CD4-positive, alpha-beta memory T cell (primary cell): ENCODE measurements at regions of chrX and their contacts with region 1.

Region 1: GRCh38 chrX:132292793-132293192 is 73.5 kb upstream of the RAP2C start:
- DNase-seq: peak; percentile 32 to 49 (median 37)
- H3K4me3 ChIP-seq: no peak overlapping the region
- H3K4me3 Mint-ChIP-seq: no peak overlapping the region
- H3K27ac ChIP-seq: no peak overlapping the region
- H3K27ac Mint-ChIP-seq: no peak overlapping the region
- H3K4me1 ChIP-seq: no peaks in the 10 kb centered on the region
- H3K4me1 Mint-ChIP-seq: peaks cover 0 to under 1% (median 0%) of the 10 kb centered on the region in 4 donors
- H3K27me3 ChIP-seq: no peaks in the 10 kb centered on the region
- H3K27me3 Mint-ChIP-seq: no peaks in the 10 kb centered on the region

Region 2: DNA sequence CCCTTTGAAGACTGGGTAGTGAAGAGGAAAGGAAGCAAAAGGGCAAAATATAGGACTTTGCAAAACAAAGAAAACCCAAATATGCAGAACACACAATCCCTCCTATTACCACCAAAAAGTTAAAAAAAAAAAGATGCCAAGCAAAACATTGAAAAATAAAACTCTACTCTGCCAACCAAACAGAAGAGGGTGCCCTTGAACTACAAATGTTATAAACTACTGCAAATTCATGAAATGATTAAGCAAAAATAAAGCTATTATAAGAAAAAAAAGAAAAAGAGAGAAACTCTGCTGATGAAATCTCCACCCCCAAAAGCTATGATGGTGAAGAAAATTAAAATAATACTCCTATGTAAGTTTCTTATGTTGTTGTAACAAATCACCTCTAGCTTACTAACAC is 438.2 kb before region 1 on chrX:
- CTCF ChIA-PET with region 1: no interaction called
- POLR2A ChIA-PET with region 1: no interaction called
- intact Hi-C with region 1: loop called (anchors 5 kb)
- DNase-seq: peak in 4 of 5 donors; percentile 26 to 33 (median 30)
- H3K4me3 ChIP-seq: no peak overlapping the region
- H3K4me3 Mint-ChIP-seq: no peak overlapping the region
- H3K27ac ChIP-seq: no peak overlapping the region
- H3K27ac Mint-ChIP-seq: no peak overlapping the region
- H3K4me1 ChIP-seq: no peaks in the 10 kb centered on the region
- H3K4me1 Mint-ChIP-seq: no peaks in the 10 kb centered on the region
- H3K27me3 ChIP-seq: no peaks in the 10 kb centered on the region
- H3K27me3 Mint-ChIP-seq: no peaks in the 10 kb centered on the region

Region 3: DNA sequence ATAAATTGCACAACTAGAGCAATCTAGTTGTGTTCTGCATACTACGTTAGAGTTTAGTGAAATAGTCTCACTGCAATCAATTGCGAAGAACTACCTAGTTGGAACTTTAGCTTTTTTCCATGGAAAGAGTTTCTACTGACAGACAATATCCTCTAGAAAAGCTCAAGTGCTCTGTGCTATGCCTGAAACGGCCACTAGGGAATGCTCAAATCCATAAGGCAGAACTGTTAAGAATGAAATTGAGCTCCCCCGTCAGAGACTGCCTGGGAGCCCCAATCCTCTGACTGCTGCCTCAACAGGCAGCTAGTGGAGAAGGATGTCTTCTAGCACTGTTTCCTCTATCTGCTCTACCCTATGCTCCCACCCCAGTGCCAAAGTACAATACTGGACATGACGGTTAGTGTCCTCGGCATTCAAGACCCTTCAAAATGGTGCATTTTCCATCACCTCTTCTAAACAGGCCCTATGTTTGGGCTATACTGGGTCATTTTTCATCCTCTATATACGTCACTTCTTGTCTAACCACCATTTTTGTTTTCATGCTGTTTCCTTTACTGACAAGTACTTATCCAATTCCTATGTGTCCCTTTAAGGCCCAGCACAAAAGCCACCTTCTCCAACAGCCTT is 200.2 kb before region 1 on chrX:
- CTCF ChIA-PET with region 1: interaction called, 6 read pairs
- POLR2A ChIA-PET with region 1: no interaction called
- intact Hi-C with region 1: loop called (anchors 5 kb)
- DNase-seq: peak; percentile 39 to 50 (median 42)
- H3K4me3 ChIP-seq: no peak overlapping the region
- H3K4me3 Mint-ChIP-seq: peak overlapping the region in 1 of 8 donors; percentile 11
- H3K27ac ChIP-seq: no peak overlapping the region
- H3K27ac Mint-ChIP-seq: peak overlapping the region in 1 of 7 donors; percentile 41
- H3K4me1 ChIP-seq: no peaks in the 10 kb centered on the region
- H3K4me1 Mint-ChIP-seq: peaks cover 0 to 5% (median 2%) of the 10 kb centered on the region in 4 donors
- H3K27me3 ChIP-seq: no peaks in the 10 kb centered on the region
- H3K27me3 Mint-ChIP-seq: peaks cover 3% of the 10 kb centered on the region in 2 donors

Region 4: DNA sequence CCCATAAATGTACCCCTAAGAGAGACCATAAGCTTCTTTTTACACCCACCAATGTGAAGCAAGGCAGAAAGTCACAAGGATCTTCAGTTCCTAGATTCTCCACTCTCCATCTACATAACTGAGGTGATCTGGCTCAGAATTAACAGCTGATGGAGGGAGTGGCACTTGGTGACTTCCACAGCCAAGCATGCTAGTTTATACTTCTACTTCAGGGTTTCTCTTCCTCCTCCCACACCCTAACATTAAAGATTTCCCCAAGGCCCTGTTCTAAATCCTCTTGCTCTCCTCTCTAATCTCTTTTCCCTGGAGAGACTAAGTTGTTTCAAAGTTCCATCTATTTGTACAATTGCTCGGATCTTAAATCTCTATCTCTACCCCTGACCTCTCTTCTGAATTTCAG is 114.9 kb after region 1 on chrX:
- CTCF ChIA-PET with region 1: no interaction called
- POLR2A ChIA-PET with region 1: no interaction called
- intact Hi-C with region 1: no loop called
- DNase-seq: no peak
- H3K4me3 ChIP-seq: no peak overlapping the region
- H3K4me3 Mint-ChIP-seq: no peak overlapping the region
- H3K27ac ChIP-seq: no peak overlapping the region
- H3K27ac Mint-ChIP-seq: peak overlapping the region in 1 of 7 donors; percentile 83
- H3K4me1 ChIP-seq: no peaks in the 10 kb centered on the region
- H3K4me1 Mint-ChIP-seq: peaks cover 0 to 4% (median under 1%) of the 10 kb centered on the region in 4 donors
- H3K27me3 ChIP-seq: no peaks in the 10 kb centered on the region
- H3K27me3 Mint-ChIP-seq: no peaks in the 10 kb centered on the region

Region 5: GRCh38 chrX:132488819-132489577 is 196.2 kb after region 1 on chrX and contains the start of gene MBNL3:
- CTCF ChIA-PET with region 1: interaction called, 10 read pairs
- POLR2A ChIA-PET with region 1: no interaction called
- intact Hi-C with region 1: loop called (anchors 10 kb)
- DNase-seq: peak; percentile 61 to 84 (median 73)
- H3K4me3 ChIP-seq: peak within 1 kb of the TSS in 1 of 2 donors; percentile 68
- H3K4me3 Mint-ChIP-seq: peak within 1 kb of the TSS; percentile 94 to 97 (median 96)
- H3K27ac ChIP-seq: peak within 1 kb of the TSS; percentile 71
- H3K27ac Mint-ChIP-seq: peak within 1 kb of the TSS; percentile 93 to 98 (median 95)
- H3K4me1 ChIP-seq: peaks cover 39% of the 10 kb centered on the region
- H3K4me1 Mint-ChIP-seq: peaks cover 28 to 55% (median 45%) of the 10 kb centered on the region in 4 donors
- H3K27me3 ChIP-seq: no peaks in the 10 kb centered on the region
- H3K27me3 Mint-ChIP-seq: no peaks in the 10 kb centered on the region
- total RNA-seq, gene MBNL3: 36.6 to 39.6 TPM

Region 6: GRCh38 chrX:132592880-132593279 is 300.1 kb after region 1 on chrX:
- CTCF ChIA-PET with region 1: interaction called, 8 read pairs
- POLR2A ChIA-PET with region 1: no interaction called
- intact Hi-C with region 1: loop called (anchors 1 kb)
- DNase-seq: peak in 3 of 5 donors; percentile 4 to 28 (median 8)
- H3K4me3 ChIP-seq: no peak overlapping the region
- H3K4me3 Mint-ChIP-seq: no peak overlapping the region
- H3K27ac ChIP-seq: no peak overlapping the region
- H3K27ac Mint-ChIP-seq: no peak overlapping the region
- H3K4me1 ChIP-seq: no peaks in the 10 kb centered on the region
- H3K4me1 Mint-ChIP-seq: no peaks in the 10 kb centered on the region
- H3K27me3 ChIP-seq: no peaks in the 10 kb centered on the region
- H3K27me3 Mint-ChIP-seq: no peaks in the 10 kb centered on the region

Region 7: GRCh38 chrX:132622130-132622529 is 329.3 kb after region 1 on chrX:
- CTCF ChIA-PET with region 1: interaction called, 17 read pairs
- POLR2A ChIA-PET with region 1: no interaction called
- intact Hi-C with region 1: no loop called
- DNase-seq: no peak
- H3K4me3 ChIP-seq: no peak overlapping the region
- H3K4me3 Mint-ChIP-seq: no peak overlapping the region
- H3K27ac ChIP-seq: no peak overlapping the region
- H3K27ac Mint-ChIP-seq: peak overlapping the region in 1 of 7 donors; percentile 10
- H3K4me1 ChIP-seq: no peaks in the 10 kb centered on the region
- H3K4me1 Mint-ChIP-seq: no peaks in the 10 kb centered on the region
- H3K27me3 ChIP-seq: no peaks in the 10 kb centered on the region
- H3K27me3 Mint-ChIP-seq: no peaks in the 10 kb centered on the region

Region 8: DNA sequence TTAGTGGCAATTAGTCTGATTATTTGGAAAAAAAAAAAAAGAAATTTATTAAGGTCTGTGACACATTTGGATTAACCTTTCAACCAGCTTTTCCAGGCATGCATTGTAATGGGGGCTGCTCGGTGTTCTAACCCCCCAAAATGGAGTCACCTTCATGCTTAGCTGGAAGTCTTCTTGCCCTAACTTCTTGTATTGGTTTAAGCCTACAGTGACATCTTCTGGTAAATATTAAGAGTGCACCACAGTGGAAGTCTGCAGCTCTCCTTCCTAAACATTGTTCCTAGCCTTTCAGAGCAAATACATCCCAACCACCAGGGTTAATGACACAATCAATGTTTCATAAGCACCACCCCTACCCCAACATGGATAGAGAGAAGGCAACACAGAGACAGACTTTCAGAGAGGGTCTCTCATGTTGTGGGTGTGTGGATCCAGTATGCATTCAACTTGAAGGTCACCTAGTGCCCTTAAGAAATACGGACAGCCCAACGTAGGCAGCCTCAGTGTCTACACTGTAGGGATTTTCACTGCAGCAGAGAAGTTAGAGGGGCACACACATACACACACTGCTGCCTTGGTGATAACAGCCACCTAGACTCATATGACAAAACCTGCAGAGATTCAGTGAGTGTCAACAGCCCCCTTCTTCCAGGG is 338.9 kb after region 1 on chrX:
- CTCF ChIA-PET with region 1: interaction called, 30 read pairs
- POLR2A ChIA-PET with region 1: no interaction called
- intact Hi-C with region 1: loop called (anchors 1 kb)
- DNase-seq: peak in 4 of 5 donors; percentile 18 to 37 (median 26)
- H3K4me3 ChIP-seq: no peak overlapping the region
- H3K4me3 Mint-ChIP-seq: no peak overlapping the region
- H3K27ac ChIP-seq: no peak overlapping the region
- H3K27ac Mint-ChIP-seq: no peak overlapping the region
- H3K4me1 ChIP-seq: no peaks in the 10 kb centered on the region
- H3K4me1 Mint-ChIP-seq: peaks cover 0 to 2% (median 0%) of the 10 kb centered on the region in 4 donors
- H3K27me3 ChIP-seq: no peaks in the 10 kb centered on the region
- H3K27me3 Mint-ChIP-seq: peaks cover 0 to 3% of the 10 kb centered on the region in 2 donors